ENCODE measurements at regions of chr17 and their contacts with region 1.

Region 1: DNA sequence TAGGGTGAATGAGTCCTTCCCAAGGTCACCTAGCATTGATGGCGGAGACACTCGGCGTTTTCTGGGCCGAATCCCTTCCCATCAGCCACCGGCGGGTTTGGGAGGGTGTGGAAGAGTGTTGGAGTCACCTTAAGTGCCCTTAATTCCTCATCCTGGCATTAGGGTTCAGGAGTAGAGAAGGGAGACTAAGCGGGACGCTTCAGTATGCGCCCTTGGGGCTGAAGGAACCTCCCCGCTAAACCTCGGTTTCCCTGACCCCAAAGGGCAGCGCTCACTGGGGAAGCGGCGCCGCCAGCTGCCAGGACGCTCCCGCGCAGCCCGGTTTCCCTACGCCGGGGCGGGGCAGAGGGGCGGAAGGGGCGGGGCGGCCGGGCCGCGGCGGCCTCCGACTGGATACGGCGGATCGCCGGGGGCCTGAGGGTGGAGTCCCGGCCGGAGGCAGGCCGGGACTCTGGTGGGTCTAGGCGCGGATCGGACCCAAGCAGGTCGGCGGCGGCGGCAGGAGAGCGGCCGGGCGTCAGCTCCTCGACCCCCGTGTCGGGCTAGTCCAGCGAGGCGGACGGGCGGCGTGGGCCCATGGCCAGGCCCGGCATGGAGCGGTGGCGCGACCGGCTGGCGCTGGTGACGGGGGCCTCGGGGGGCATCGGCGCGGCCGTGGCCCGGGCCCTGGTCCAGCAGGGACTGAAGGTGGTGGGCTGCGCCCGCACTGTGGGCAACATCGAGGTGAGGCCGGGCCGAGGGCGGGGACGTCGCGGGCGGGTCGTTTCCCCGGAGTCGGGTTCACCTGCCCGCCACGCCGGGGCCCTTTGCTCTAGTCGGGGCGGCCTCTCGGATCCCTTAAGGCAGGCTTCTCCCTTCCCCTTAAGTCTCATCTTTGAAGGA is at the start of gene DHRS11:
- DNase-seq: peak; percentile 90
- ATAC-seq: peak; percentile 95 to 98 (median 98)
- H3K4me3 ChIP-seq: peak within 1 kb of the TSS; percentile 85 to 90 (median 86)
- H3K27ac ChIP-seq: peak within 1 kb of the TSS in 1 of 3 donors; percentile 34
- H3K4me1 ChIP-seq: peaks cover 0 to 16% (median 4%) of the 10 kb centered on the region in 4 donors
- H3K27me3 ChIP-seq: no peaks in the 10 kb centered on the region
- CTCF ChIP-seq: peak in 2 of 4 donors; percentile 19 to 20
- POLR2A ChIP-seq: peak; percentile 29
- total RNA-seq, gene DHRS11: 5.1 to 13.6 (median 9.3) TPM

Region 2: DNA sequence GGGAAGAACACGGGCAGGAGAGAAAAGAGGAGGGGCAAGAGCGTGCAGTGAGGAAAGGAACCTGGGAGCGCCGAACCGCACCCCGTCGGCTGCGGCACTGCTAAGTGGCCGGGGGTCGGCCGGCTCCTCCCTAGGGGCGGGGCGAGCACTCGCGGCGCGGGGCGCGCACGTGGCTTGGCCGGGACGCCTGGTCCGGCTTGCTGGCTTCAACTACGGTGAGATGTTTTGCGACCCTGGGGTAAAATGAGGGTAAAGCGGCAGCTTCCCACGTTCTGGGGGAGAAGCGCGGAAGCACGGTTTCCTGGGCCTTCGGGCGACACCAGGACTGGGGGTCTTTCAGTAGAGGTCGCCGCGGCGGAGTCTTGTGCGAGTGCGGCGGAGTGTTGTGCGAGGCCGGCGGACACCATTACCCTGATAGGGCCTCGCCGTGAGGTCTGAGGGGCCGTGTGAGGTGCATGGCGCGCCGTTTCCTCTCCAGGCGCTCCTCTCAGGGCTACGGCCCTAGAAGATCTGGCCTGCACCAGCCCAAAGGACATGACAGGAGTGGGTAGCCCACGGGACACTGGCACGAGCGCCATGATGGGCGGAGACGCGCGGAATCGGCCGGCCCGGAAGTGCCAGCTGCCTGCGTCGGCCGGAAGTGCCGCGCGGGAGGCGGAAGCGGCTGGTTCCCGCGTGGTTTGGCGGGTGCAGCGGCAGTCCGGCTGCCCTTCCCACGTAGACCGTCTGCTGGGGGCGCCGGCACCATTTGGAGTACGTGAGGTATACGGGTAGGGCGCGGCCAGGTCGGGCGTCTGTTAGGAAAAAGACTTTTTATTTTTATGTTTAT is 56.6 kb before region 1 on chr17 and contains the starts of genes MYO19 and PIGW:
- intact Hi-C with region 1: loop called (anchors 10 kb)
- DNase-seq: peak; percentile 91 to 93 (median 91)
- ATAC-seq: peak; percentile 88 to 96 (median 90)
- H3K4me3 ChIP-seq: peak within 1 kb of the TSS; percentile 64 to 95 (median 66)
- H3K27ac ChIP-seq: peak within 1 kb of the TSS; percentile 77 to 83 (median 81)
- H3K4me1 ChIP-seq: peaks cover 0 to 7% (median 2%) of the 10 kb centered on the region in 4 donors
- H3K27me3 ChIP-seq: no peaks in the 10 kb centered on the region
- CTCF ChIP-seq: peak in 3 of 4 donors; percentile 6 to 36 (median 18)
- POLR2A ChIP-seq: peak; percentile 83
- total RNA-seq, gene MYO19: 20.6 to 40.5 (median 28.9) TPM
- total RNA-seq, gene PIGW: 3.0 to 6.1 (median 4.1) TPM

Region 3: GRCh38 chr17:36545465-36546417 is 45.9 kb before region 1 on chr17:
- intact Hi-C with region 1: loop called in 1 of 2 experiments (anchors 10 kb)
- DNase-seq: peak; percentile 80 to 97 (median 97)
- ATAC-seq: peak; percentile 78 to 90 (median 84)
- H3K4me3 ChIP-seq: peak overlapping the region; percentile 92 to 98 (median 94)
- H3K27ac ChIP-seq: peak overlapping the region; percentile 92 to 98 (median 98)
- H3K4me1 ChIP-seq: peaks cover 0 to 44% (median 11%) of the 10 kb centered on the region in 4 donors
- H3K27me3 ChIP-seq: no peaks in the 10 kb centered on the region
- CTCF ChIP-seq: peak in 1 of 4 donors; percentile 3
- POLR2A ChIP-seq: peak; percentile 77